GM18951 (cell line): ENCODE measurements at regions of chr1 and their contacts with region 1.

Region 1: GRCh38 chr1:152189657-152190442 is 30.8 kb upstream of the RPTN start:
- POLR2A ChIP-seq: no peak

Region 2: DNA sequence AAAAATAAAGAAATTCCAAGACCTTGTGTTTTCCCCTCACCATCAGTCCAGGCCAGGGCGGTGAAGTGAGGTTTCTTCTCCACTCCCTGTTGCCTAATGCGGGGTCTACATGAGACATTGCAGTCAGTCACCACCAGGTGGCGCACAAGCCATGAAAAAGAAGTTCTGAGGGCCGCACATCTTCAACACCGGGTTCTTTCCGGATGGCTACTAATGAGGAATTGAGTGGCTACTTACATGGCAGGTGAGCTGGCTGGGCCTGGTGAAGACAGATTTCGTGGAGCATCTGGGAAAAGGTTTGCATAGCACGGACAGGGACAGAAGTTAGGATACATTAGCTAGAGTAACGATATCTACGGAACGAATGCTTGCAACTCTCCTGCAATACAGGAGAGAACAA is 137.2 kb before region 1 on chr1:
- in situ Hi-C with region 1: loop called (anchors 10 kb)
- POLR2A ChIP-seq: no peak

Region 3: DNA sequence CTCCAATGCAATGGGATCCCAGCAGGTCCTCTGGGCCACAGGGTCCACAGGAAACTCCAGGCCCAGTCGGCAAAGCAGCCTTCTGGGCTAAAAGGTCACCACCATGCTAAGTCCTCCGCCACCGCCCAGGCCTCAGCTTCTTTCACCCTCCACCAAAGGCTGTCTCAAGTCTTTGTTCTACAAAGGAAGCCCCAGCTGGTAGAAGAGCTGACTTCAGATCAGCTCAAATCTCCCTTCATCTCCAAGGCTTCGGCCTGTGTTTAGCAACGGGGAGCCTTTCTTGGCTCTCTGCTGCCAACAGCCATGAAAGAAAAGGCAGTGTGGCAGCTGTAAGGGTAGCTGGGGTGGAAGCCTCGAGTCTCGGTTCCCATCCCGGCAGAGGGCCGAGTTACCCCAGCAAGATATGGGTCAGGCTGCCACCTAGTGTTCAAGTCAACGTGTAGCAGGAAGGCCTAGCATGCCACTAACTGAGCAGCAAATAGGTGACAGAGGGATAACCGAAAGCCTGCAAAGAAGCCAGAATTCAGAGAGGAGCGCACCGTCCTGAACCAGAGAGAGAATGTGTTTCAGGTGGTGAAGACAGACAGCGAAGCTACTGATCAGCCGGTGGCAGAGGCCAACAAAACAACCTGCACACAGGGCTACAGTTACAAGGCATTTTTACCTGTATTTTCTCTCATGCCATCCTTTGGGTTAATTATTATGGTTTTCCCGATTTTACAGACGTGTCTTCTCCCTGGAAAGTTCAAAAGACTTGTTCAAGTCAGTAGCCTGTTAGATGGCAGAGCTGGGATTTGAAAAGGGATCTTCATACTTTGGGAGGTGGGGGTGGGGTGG is 251.0 kb after region 1 on chr1:
- in situ Hi-C with region 1: loop called (anchors 10 kb)
- POLR2A ChIP-seq: no peak

Region 4: GRCh38 chr1:152497273-152497672 is 307.4 kb after region 1 on chr1:
- in situ Hi-C with region 1: no loop called
- POLR2A ChIP-seq: no peak